Naive thymus-derived CD4-positive, alpha-beta T cell (primary cell): ENCODE measurements at regions of chr11 and their contacts with region 1.

Region 1: DNA sequence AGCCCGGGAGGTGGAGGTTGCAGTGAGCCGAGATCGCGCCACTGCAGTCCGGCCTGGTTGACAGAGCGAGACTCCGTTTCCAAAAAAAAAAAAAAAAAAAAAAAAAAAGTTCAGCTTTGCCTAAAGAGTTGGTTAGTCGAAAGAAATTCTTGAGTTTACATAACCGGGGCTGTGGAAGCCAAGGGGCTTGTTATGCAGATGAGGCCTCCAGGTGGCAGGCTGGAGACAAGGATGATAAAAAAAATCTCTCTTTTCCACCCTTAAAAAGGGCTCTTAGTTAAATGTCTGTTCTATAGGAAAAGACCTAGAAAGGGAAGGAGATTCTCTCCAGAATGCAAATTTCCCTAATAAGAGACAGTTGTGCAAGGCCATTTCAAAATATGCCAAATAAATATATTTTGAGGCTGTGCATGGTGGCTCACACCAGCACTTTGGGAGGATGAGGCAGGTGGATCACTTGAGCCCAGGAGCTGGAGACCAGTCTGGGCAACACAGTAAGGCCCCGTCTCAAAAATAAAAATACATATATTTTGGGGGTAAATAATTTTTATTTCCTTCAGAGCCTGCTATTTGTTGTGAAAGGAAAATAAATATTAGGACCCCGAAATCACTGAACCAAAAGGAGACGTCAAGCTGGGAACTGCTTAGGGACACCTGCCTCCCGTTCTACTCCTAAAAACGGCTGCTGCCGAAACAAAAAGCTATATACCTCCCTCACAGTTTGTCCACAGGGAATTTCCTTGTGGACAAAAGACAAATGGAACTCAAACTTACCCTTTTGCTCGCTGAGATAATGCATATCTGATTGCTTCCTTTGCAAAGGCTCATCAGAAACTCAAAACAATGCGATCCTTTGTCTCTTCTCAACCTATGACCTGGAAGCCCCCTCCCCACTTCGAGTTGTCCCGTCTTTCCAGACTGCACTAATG is 2.4 kb upstream of the IFITM2 start:
- DNase-seq: peak in 6 of 9 donors; percentile 62 to 76 (median 70)
- ATAC-seq: peak; percentile 44
- H3K4me3 ChIP-seq: no peak overlapping the region
- H3K4me3 Mint-ChIP-seq: peak overlapping the region in 7 of 10 donors; percentile 0 to 55 (median 47)
- H3K27ac ChIP-seq: peak overlapping the region; percentile 95
- H3K27ac Mint-ChIP-seq: peak overlapping the region; percentile 14 to 97 (median 84)
- H3K4me1 ChIP-seq: peaks cover 21 to 24% of the 10 kb centered on the region in 2 donors
- H3K4me1 Mint-ChIP-seq: peaks cover 29 to 61% (median 48%) of the 10 kb centered on the region in 7 donors
- H3K27me3 ChIP-seq: no peaks in the 10 kb centered on the region
- H3K27me3 Mint-ChIP-seq: peaks cover 0 to 9% (median 0%) of the 10 kb centered on the region in 5 donors

Region 2: GRCh38 chr11:279966-280582 is 25.1 kb before region 1 on chr11:
- CTCF ChIA-PET with region 1: interaction called, 4 read pairs
- POLR2A ChIA-PET with region 1: interaction called, 28 read pairs
- intact Hi-C with region 1: loop called in 1 of 2 experiments (anchors 2 kb)
- DNase-seq: peak in 6 of 9 donors; percentile 40 to 59 (median 54)
- ATAC-seq: peak; percentile 70
- H3K4me3 ChIP-seq: peak overlapping the region; percentile 52
- H3K4me3 Mint-ChIP-seq: peak overlapping the region; percentile 80 to 93 (median 89)
- H3K27ac ChIP-seq: peak overlapping the region; percentile 61
- H3K27ac Mint-ChIP-seq: peak overlapping the region in 6 of 9 donors; percentile 75 to 90 (median 82)
- H3K4me1 ChIP-seq: peaks cover 22% of the 10 kb centered on the region in 2 donors
- H3K4me1 Mint-ChIP-seq: peaks cover 37 to 67% (median 52%) of the 10 kb centered on the region in 7 donors
- H3K27me3 ChIP-seq: no peaks in the 10 kb centered on the region
- H3K27me3 Mint-ChIP-seq: peaks cover 0 to 53% (median 0%) of the 10 kb centered on the region in 5 donors

Region 3: GRCh38 chr11:355581-356458 is 50.6 kb after region 1 on chr11:
- CTCF ChIA-PET with region 1: interaction called, 19 read pairs
- POLR2A ChIA-PET with region 1: interaction called, 16 read pairs
- intact Hi-C with region 1: loop called in 1 of 2 experiments (anchors 1 kb)
- DNase-seq: peak; percentile 74 to 92 (median 90)
- ATAC-seq: peak; percentile 89
- H3K4me3 ChIP-seq: peak overlapping the region; percentile 66
- H3K4me3 Mint-ChIP-seq: peak overlapping the region in 8 of 10 donors; percentile 83 to 93 (median 88)
- H3K27ac ChIP-seq: peak overlapping the region; percentile 97
- H3K27ac Mint-ChIP-seq: peak overlapping the region in 6 of 9 donors; percentile 89 to 99 (median 98)
- H3K4me1 ChIP-seq: peaks cover 9 to 19% of the 10 kb centered on the region in 2 donors
- H3K4me1 Mint-ChIP-seq: peaks cover 29 to 45% (median 37%) of the 10 kb centered on the region in 7 donors
- H3K27me3 ChIP-seq: no peaks in the 10 kb centered on the region
- H3K27me3 Mint-ChIP-seq: peaks cover 0 to 6% (median 0%) of the 10 kb centered on the region in 5 donors

Region 4: DNA sequence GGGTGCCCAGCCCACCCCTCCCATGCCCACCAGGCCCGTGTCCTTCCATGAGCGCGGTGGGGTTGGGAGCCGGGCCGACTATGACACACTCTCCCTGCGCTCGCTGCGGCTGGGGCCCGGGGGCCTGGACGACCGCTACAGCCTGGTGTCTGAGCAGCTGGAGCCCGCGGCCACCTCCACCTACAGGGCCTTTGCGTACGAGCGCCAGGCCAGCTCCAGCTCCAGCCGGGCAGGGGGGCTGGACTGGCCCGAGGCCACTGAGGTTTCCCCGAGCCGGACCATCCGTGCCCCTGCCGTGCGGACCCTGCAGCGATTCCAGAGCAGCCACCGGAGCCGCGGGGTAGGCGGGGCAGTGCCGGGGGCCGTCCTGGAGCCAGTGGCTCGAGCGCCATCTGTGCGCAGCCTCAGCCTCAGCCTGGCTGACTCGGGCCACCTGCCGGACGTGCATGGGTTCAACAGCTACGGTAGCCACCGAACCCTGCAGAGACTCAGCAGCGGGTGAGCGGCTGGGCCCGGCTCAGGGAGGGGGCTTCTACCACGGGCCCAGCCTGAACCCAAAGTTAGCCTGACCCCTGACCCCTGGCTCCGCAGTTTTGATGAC is 91.9 kb after region 1 on chr11:
- CTCF ChIA-PET with region 1: interaction called, 3 read pairs
- POLR2A ChIA-PET with region 1: no interaction called
- intact Hi-C with region 1: loop called in 1 of 2 experiments (anchors 1 kb)
- DNase-seq: peak in 1 of 9 donors; percentile 46
- ATAC-seq: peak; percentile 77
- H3K4me3 ChIP-seq: no peak overlapping the region
- H3K4me3 Mint-ChIP-seq: peak overlapping the region in 4 of 10 donors; percentile 29 to 69 (median 46)
- H3K27ac ChIP-seq: no peak overlapping the region
- H3K27ac Mint-ChIP-seq: no peak overlapping the region
- H3K4me1 ChIP-seq: no peaks in the 10 kb centered on the region
- H3K4me1 Mint-ChIP-seq: peaks cover 0 to 11% (median 0%) of the 10 kb centered on the region in 7 donors
- H3K27me3 ChIP-seq: no peaks in the 10 kb centered on the region
- H3K27me3 Mint-ChIP-seq: peaks cover 0 to 9% (median 0%) of the 10 kb centered on the region in 5 donors